K562 (cell line): ENCODE measurements at regions of chr10 and their contacts with region 1.

Region 1: GRCh38 chr10:89224739-89225443 is 17.8 kb upstream of the CH25H start:
- DNase-seq: peak in 1 of 4 experiments; percentile 7
- ATAC-seq: no peak
- H3K4me3 ChIP-seq: no peak overlapping the region
- H3K27ac ChIP-seq: no peak overlapping the region
- H3K4me1 ChIP-seq: no peaks in the 10 kb centered on the region
- H3K27me3 ChIP-seq: peaks cover 0 to 2% of the 10 kb centered on the region in 2 experiments; a peak in 1 of 5 replicates
- CTCF ChIP-seq: peak; percentile 29 to 37 (median 32); a peak in 3 of 6 replicates
- EP300 ChIP-seq: no peak
- POLR2A ChIP-seq: no peak
- RAD21 ChIP-seq: no peak

Region 2: DNA sequence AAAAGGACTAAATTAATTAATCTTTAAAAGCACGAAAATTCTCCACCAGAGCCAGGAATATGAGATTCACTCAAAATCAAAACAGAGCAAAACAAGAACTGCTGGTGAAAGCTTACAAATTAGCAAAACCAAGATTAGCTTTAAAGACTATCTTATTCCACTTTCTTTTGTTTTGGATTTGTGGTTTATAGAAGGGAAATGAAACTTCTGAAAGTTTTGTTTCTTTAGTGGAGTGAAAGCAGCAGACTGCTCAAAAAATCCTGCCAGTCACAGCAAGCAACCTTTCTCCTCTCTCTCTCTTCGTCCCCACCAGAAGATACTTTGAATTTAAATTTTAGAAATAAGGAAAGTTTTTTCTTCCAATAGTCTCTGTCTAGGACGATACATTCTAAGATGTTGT is 280.1 kb before region 1 on chr10:
- CTCF ChIA-PET with region 1: no interaction called
- POLR2A ChIA-PET with region 1: no interaction called
- in situ Hi-C with region 1: loop called (anchors 5 kb)
- intact Hi-C with region 1: no loop called
- DNase-seq: no peak
- ATAC-seq: no peak
- H3K4me3 ChIP-seq: no peak overlapping the region
- H3K27ac ChIP-seq: no peak overlapping the region
- H3K4me1 ChIP-seq: no peaks in the 10 kb centered on the region
- H3K27me3 ChIP-seq: no peaks in the 10 kb centered on the region
- CTCF ChIP-seq: no peak
- EP300 ChIP-seq: no peak
- POLR2A ChIP-seq: no peak
- RAD21 ChIP-seq: no peak

Region 3: GRCh38 chr10:89251409-89252224 is 26.7 kb after region 1 on chr10 and contains the start of gene LIPA:
- CTCF ChIA-PET with region 1: no interaction called
- POLR2A ChIA-PET with region 1: no interaction called
- in situ Hi-C with region 1: no loop called
- intact Hi-C with region 1: no loop called
- DNase-seq: peak in 1 of 4 experiments; percentile 1
- ATAC-seq: no peak
- H3K4me3 ChIP-seq: no peak within 1 kb of the TSS
- H3K27ac ChIP-seq: no peak within 1 kb of the TSS
- H3K4me1 ChIP-seq: peaks cover 0 to 6% of the 10 kb centered on the region in 2 experiments; a peak in 2 of 5 replicates
- H3K27me3 ChIP-seq: no peaks in the 10 kb centered on the region
- CTCF ChIP-seq: no peak
- EP300 ChIP-seq: no peak
- POLR2A ChIP-seq: no peak
- RAD21 ChIP-seq: no peak
- polyA plus RNA-seq, gene LIPA: 0.13 to 0.20 TPM

Region 4: GRCh38 chr10:89367529-89367928 is 142.6 kb after region 1 on chr10:
- CTCF ChIA-PET with region 1: no interaction called
- POLR2A ChIA-PET with region 1: no interaction called
- in situ Hi-C with region 1: no loop called
- intact Hi-C with region 1: no loop called
- DNase-seq: no peak
- ATAC-seq: no peak
- H3K4me3 ChIP-seq: no peak overlapping the region
- H3K27ac ChIP-seq: no peak overlapping the region
- H3K4me1 ChIP-seq: peaks cover 0 to 24% of the 10 kb centered on the region in 2 experiments; a peak in 3 of 5 replicates
- H3K27me3 ChIP-seq: no peaks in the 10 kb centered on the region
- CTCF ChIP-seq: no peak
- EP300 ChIP-seq: no peak
- POLR2A ChIP-seq: no peak
- RAD21 ChIP-seq: no peak